ENCODE measurements at regions of chr10 and their contacts with region 1.

Region 1: GRCh38 chr10:30392564-30392990 is 41.4 kb upstream of the MAP3K8 start:
- DNase-seq: peak; percentile 92

Region 2: GRCh38 chr10:30359373-30360206 is 33.0 kb before region 1 on chr10:
- intact Hi-C with region 1: loop called in 1 of 2 experiments (anchors 1 kb)
- DNase-seq: no peak

Region 3: GRCh38 chr10:30591249-30591670 is 198.7 kb after region 1 on chr10:
- intact Hi-C with region 1: loop called (anchors 5 kb)
- DNase-seq: peak; percentile 22

Measured in posterior vena cava (tissue), 2 donors.